A549 (cell line): ENCODE measurements at regions of chr9 and their contacts with region 1.

Region 1: GRCh38 chr9:113591001-113591898 is 127.7 kb downstream of the RGS3 start:
- DNase-seq: peak; percentile 72 to 77
- ATAC-seq: peak; percentile 57 to 68
- H3K4me3 ChIP-seq: no peak overlapping the region
- H3K27ac ChIP-seq: peak overlapping the region; percentile 28 to 53; a peak in 4 of 6 replicates
- H3K4me1 ChIP-seq: peaks cover 21% of the 10 kb centered on the region
- CTCF ChIP-seq: peak; percentile 96
- EP300 ChIP-seq: no peak
- POLR2A ChIP-seq: no peak
- RAD21 ChIP-seq: peak; percentile 98

Region 2: DNA sequence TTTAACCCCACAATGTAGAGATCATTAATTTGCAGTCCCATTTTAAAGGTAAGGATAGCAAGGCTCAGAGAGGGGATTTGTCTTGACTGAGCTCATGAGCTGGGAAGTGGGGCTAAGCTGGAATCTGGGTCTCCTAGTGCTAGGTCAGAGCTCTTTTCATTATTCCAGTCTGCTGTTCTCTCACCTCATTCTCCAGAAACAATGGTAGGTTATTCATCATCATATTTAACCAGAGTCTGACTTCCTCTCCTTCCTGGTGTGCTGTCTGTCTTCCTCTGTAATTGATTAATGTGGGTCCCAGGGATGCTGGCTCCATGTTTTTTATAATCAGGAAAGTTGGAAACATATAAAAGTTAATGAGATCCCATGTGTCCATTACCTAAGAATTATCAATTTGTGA is 160.1 kb before region 1 on chr9:
- CTCF ChIA-PET with region 1: interaction called, 23 read pairs
- POLR2A ChIA-PET with region 1: no interaction called
- DNase-seq: no peak
- ATAC-seq: no peak
- H3K4me3 ChIP-seq: no peak overlapping the region
- H3K27ac ChIP-seq: no peak overlapping the region
- H3K4me1 ChIP-seq: no peaks in the 10 kb centered on the region
- CTCF ChIP-seq: no peak
- EP300 ChIP-seq: no peak
- POLR2A ChIP-seq: no peak
- RAD21 ChIP-seq: no peak

Region 3: GRCh38 chr9:113463418-113464285 is 127.6 kb before region 1 on chr9 and contains the start of gene RGS3:
- CTCF ChIA-PET with region 1: interaction called, 59 read pairs
- POLR2A ChIA-PET with region 1: no interaction called
- DNase-seq: peak; percentile 68 to 83
- ATAC-seq: peak; percentile 96 to 97
- H3K4me3 ChIP-seq: peak within 1 kb of the TSS; percentile 69
- H3K27ac ChIP-seq: peak within 1 kb of the TSS; percentile 77 to 89
- H3K4me1 ChIP-seq: peaks cover 25% of the 10 kb centered on the region
- CTCF ChIP-seq: no peak
- EP300 ChIP-seq: no peak
- POLR2A ChIP-seq: no peak
- RAD21 ChIP-seq: 0 out of 5 replicates have a peak, but pooled peaks of 1 of the 2 experiments have one; percentile 11
- polyA plus RNA-seq, gene RGS3: 19.6 and 21.5 TPM in 2 replicates

Region 4: DNA sequence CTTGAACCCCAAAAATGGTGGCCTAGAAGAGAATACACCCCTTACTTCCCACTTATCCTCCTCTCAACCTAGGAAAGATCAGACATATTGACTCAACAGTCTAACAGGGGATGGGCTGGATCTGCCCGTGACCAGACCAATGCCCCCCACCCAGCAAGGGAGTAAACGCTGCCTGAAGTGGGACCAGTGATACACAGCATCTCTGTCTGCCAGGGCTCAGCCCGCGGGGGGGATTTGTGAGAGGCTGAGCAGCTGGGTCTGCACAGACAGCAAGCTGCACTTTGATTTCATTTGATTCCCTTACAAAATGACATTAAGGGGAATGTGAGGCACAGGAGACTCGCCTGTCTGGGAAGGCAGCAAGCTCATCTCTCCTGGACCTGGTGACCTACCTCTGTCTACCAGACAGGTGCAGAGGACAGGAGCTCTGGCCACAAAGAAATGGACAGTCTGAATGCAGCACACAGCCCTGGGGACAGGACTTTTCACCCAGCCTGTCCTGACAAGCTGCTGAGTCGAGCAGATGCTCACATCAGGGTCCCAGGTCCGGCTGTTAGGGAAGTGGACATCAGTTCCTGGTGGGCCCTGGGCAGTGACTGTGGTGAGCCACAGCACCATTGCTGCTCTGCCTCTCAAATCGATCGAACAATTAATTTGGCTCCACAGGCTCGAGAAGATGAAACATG is 47.8 kb before region 1 on chr9:
- CTCF ChIA-PET with region 1: interaction called, 10 read pairs
- POLR2A ChIA-PET with region 1: no interaction called
- DNase-seq: no peak
- ATAC-seq: no peak
- H3K4me3 ChIP-seq: no peak overlapping the region
- H3K27ac ChIP-seq: no peak overlapping the region
- H3K4me1 ChIP-seq: no peaks in the 10 kb centered on the region
- CTCF ChIP-seq: no peak
- EP300 ChIP-seq: no peak
- POLR2A ChIP-seq: no peak
- RAD21 ChIP-seq: no peak

Region 5: DNA sequence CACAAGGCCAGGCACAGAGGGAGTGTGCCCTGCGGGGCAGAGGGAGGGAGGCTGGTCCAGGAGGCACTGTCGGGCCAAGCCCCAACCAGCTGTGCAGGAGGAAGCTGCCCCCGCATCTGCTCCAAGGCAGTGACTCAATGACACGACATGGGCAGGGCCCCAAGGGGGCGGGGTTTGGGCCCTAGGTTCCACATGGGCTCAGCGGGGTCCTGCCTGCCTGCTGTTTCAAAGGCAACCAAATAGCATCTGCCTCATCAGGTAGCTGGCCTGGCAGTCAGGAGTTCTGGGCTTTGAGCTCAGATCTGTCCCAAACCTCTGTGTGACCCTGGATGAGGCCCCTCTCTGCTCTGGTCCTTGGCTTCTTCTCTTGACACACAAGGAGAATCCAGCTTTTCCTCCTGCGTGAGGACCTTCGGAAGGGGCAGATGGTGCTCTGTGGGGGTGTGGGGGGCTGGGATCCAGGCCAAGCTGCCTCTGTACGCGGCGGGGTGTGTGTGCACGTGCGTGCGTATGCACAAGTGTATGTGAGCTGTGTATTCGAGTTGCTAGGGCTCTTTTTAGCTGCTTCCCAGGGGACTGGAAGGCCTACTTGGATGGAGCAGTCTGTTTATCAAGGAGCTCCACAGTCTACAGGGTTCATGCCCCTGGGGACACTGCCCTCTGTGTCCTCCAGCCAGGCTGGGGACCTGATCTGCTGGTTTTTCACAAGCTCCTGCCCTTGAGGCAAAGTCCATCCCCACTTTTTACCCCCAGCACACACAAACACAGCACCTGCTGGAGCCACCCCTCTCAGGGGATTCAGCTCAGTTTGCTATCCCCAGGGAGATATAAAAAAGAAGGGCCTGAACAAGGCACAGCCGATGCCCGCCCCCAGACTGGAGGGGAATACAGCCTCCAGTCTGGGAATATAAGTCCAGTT is 11.1 kb after region 1 on chr9:
- CTCF ChIA-PET with region 1: interaction called, 168 read pairs
- POLR2A ChIA-PET with region 1: interaction called, 8 read pairs
- DNase-seq: no peak
- ATAC-seq: peak; percentile 43 to 46; a peak in 4 of 6 replicates
- H3K4me3 ChIP-seq: no peak overlapping the region
- H3K27ac ChIP-seq: peak overlapping the region in 1 of 2 experiments; percentile 35; a peak in 1 of 6 replicates
- H3K4me1 ChIP-seq: peaks cover 7% of the 10 kb centered on the region
- CTCF ChIP-seq: no peak
- EP300 ChIP-seq: no peak
- POLR2A ChIP-seq: no peak
- RAD21 ChIP-seq: no peak

Region 6: DNA sequence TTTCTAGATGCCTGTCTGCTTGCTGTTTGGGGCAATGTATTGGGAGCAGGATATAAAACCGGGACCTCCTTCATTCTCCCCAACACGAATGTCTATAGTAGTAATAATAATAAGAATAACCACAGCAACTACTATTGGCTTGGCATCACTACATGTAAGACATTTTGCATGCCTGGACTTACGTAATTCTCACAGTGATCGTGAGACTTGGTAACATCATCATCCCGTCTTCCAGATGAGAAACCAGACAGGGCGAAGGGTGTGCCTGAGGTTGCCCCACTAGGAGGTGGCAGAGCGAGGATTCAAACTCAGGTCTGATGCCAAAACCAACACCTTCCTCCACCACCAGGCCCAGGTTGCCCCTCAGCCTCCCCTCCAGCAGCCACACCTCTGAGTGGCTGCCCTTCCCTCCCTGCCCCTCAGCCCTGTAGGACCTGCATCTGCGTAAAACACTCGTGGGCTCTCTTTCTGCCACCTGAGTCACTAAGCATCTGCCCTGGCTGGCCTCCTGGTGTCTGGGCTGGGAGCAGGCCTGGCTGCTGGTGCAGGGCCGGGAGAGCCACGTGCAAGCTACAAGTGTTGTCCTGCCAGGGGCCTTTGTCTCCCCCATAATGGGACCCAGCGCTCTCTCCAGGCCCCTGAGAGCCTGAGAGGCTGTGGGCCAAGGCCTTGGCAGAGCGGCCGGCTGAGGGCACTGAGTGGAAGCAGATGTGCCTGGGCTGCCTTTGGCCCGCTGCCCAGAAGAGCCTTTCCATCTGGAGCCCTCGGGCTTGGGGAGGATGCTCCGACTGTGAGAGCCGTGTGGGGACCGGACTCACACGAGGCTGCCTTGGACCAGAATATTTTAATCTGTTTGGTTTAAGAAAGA is 57.6 kb after region 1 on chr9:
- CTCF ChIA-PET with region 1: interaction called, 1,349 read pairs
- POLR2A ChIA-PET with region 1: interaction called, 26 read pairs
- DNase-seq: no peak
- ATAC-seq: no peak
- H3K4me3 ChIP-seq: no peak overlapping the region
- H3K27ac ChIP-seq: peak overlapping the region in 1 of 2 experiments; percentile 72; a peak in 3 of 6 replicates
- H3K4me1 ChIP-seq: peaks cover 19% of the 10 kb centered on the region
- CTCF ChIP-seq: no peak
- EP300 ChIP-seq: no peak
- POLR2A ChIP-seq: no peak
- RAD21 ChIP-seq: no peak

Region 7: DNA sequence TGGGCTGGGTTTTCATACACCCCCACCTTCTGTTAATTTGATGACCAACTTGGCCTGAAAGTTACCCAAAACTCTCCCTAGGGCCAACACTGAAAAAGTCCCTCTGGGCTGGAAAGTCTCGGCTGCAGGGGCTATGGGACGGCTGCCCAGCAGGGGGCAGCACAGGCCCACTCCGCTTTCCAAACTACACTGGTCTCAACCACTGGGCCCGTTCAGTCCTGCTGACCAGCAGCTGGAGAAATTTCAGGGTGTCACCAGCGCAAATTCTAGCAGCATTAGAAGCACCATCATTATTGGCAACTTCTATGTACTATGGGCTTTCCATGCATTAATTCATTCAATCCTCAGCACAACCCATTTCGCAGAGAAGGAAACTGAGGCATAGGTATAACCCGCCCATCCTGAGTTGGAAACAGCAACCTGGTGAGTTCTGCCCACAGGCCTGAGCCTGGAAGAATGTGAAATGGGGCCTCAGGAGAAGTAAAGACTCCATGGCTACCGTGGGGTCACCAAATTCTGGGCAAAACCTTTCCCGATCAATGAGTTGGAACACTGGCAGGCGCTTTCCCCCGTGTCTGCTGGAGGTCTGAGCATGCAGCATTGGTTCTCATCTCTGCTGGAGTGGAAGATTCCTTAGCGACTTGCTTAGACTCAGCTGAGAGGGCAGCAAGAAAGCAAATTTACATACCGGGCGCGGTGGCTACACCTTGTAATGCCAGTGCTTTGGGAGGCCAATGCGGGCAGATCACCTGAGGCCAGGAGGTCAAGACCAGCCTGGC is 748.1 kb after region 1 on chr9:
- CTCF ChIA-PET with region 1: no interaction called
- POLR2A ChIA-PET with region 1: no interaction called
- DNase-seq: peak; percentile 44 to 84
- ATAC-seq: peak; percentile 73 to 93
- H3K4me3 ChIP-seq: no peak overlapping the region
- H3K27ac ChIP-seq: no peak overlapping the region
- H3K4me1 ChIP-seq: no peaks in the 10 kb centered on the region
- CTCF ChIP-seq: peak; percentile 77
- EP300 ChIP-seq: no peak
- POLR2A ChIP-seq: no peak
- RAD21 ChIP-seq: peak; percentile 80 to 82